GM18951 (cell line): ENCODE measurements at regions of chr6 and their contacts with region 1.

Region 1: GRCh38 chr6:163956571-163957407 is 542.3 kb downstream of the QKI start:
- POLR2A ChIP-seq: no peak

Region 2: DNA sequence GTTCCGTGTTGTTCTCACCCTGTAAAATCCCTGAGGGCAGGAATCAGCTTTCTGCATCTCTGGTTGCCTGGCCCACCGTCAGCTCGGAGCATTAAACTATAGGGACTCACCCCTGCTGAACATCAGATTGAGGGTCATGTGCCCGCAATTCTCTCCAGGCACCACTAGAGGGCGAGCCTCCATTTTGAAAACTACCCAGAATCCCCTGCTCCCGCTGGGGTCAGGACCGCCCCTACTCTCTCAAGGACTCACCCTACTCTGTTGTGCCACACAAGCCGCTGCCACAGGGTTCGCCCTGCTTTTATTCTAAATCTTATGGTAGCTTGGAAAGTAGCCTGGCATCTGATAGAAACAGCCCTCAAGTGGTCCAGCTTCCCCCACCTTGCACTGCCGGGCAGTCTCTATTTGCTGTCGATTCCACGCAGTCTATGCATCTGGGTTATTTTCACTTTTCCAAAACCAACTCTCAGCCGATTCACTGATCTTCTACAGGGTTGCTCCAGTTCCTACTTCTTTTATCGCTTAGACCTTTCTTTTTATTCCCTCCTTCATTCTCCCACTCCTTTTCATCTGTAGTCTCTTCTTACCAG is 786.4 kb before region 1 on chr6:
- in situ Hi-C with region 1: loop called (anchors 25 kb)
- POLR2A ChIP-seq: no peak

Region 3: DNA sequence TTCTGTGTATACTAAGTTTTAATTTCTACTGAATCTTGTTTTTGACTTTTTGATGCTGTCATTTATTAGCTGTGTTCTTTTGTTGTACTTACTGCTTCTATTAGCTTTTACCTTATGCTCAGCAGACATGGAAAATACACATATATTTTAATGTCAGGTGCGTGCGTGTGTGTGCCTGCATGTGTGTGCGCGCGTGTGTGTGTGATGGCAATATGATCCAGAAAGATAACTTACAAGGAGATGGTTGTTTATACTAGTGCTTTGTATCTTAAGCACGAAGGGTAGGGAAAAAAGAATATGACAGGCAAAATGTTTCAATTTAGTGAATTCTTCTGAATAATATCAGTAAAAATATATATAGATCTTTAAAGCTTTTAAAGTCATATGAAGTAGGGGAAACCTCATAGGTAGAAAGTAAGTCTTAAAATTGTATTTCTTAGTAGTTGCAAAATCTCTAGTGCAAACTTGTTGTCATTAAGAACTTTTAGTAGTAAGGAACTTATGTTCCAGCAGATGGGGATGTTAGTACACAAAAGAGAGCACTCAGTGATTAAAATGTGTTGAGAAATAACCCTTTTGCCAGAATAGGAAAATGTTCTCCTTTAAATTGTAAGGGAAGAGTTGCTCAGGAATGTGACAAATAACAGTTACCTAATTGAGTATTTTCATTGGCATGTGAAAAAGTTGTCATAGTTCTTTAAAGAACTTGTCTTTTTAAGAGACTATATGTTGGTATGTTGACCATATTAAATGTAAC is 529.1 kb before region 1 on chr6:
- in situ Hi-C with region 1: loop called (anchors 10 kb)
- POLR2A ChIP-seq: no peak